ENCODE measurements at regions of chr14 and their contacts with region 1.

Region 1: DNA sequence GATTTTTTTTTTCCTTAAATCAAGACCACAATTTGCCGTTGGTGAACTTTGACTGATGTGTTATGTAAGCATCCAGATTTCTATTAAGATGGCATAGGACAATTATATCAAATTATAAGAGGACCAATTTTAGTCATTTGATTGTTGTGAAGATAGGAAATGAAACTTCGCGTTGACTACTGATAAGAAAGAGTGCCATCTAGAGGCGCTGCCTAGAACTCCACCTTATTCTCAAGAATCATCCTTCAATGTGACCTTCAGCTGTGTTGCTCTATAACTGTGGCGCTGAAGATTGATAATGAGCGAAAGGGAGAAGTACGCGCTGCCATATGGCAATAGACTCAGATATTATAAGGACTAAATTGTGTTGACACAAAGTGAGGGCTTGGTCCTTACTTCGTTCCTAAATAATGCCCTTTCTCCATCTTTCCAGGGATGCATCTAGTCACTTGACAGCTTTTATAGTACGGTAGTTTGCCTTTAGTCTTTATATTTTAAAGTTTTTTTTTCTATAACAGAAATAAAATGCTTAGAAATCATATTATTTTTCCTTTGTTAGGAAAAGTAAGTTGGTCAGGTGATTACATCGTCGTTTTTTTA is 350.8 kb upstream of the STXBP6 start:
- DNase-seq: no peak
- ATAC-seq: no peak

Region 2: GRCh38 chr14:24710403-24711112 is 690.1 kb before region 1 on chr14:
- intact Hi-C with region 1: loop called (anchors 10 kb)
- DNase-seq: peak; percentile 55
- ATAC-seq: peak; percentile 81

Measured in Right ventricle myocardium superior (tissue), 1 donor.